Activated CD8-positive, alpha-beta T cell treated with anti-CD3 and anti-CD28 coated beads, Interleukin-2, amount 10 ng/mL, durations not matched to agents 7 days and 5 days (primary cell): ENCODE measurements at regions of chr3 and their contacts with region 1.

Region 1: GRCh38 chr3:111668912-111669488 is 73.9 kb upstream of the ZBED2 start:
- DNase-seq: no peak
- ATAC-seq: peak; percentile 32
- H3K4me3 Mint-ChIP-seq: no peak overlapping the region
- H3K27ac Mint-ChIP-seq: peak overlapping the region; percentile 75
- H3K4me1 Mint-ChIP-seq: peaks cover 84% of the 10 kb centered on the region
- H3K27me3 Mint-ChIP-seq: no peaks in the 10 kb centered on the region

Region 2: GRCh38 chr3:111598552-111598951 is 70.4 kb before region 1 on chr3:
- CTCF ChIA-PET with region 1: no interaction called
- POLR2A ChIA-PET with region 1: no interaction called
- DNase-seq: no peak
- ATAC-seq: no peak
- H3K4me3 Mint-ChIP-seq: no peak overlapping the region
- H3K27ac Mint-ChIP-seq: no peak overlapping the region
- H3K4me1 Mint-ChIP-seq: peaks cover 63% of the 10 kb centered on the region
- H3K27me3 Mint-ChIP-seq: no peaks in the 10 kb centered on the region

Region 3: GRCh38 chr3:111684640-111685039 is 15.6 kb after region 1 on chr3:
- CTCF ChIA-PET with region 1: no interaction called
- POLR2A ChIA-PET with region 1: no interaction called
- DNase-seq: no peak
- ATAC-seq: no peak
- H3K4me3 Mint-ChIP-seq: no peak overlapping the region
- H3K27ac Mint-ChIP-seq: no peak overlapping the region
- H3K4me1 Mint-ChIP-seq: peaks cover 51% of the 10 kb centered on the region
- H3K27me3 Mint-ChIP-seq: no peaks in the 10 kb centered on the region

Region 4: GRCh38 chr3:111708157-111708771 is 39.3 kb after region 1 on chr3:
- CTCF ChIA-PET with region 1: interaction called, 25 read pairs
- POLR2A ChIA-PET with region 1: no interaction called
- DNase-seq: no peak
- ATAC-seq: no peak
- H3K4me3 Mint-ChIP-seq: no peak overlapping the region
- H3K27ac Mint-ChIP-seq: no peak overlapping the region
- H3K4me1 Mint-ChIP-seq: peaks cover 14% of the 10 kb centered on the region
- H3K27me3 Mint-ChIP-seq: no peaks in the 10 kb centered on the region

Region 5: GRCh38 chr3:111859974-111860859 is 191.2 kb after region 1 on chr3:
- CTCF ChIA-PET with region 1: interaction called, 14 read pairs
- POLR2A ChIA-PET with region 1: no interaction called
- DNase-seq: peak; percentile 78
- ATAC-seq: peak; percentile 73
- H3K4me3 Mint-ChIP-seq: peak overlapping the region; percentile 86
- H3K27ac Mint-ChIP-seq: peak overlapping the region; percentile 77
- H3K4me1 Mint-ChIP-seq: peaks cover 11% of the 10 kb centered on the region
- H3K27me3 Mint-ChIP-seq: peaks cover 45% of the 10 kb centered on the region